ENCODE measurements at regions of chr16 and their contacts with region 1.

Region 1: GRCh38 chr16:760545-761343 is at the start of gene MSLN:
- DNase-seq: no peak
- CTCF ChIP-seq: no peak

Region 2: DNA sequence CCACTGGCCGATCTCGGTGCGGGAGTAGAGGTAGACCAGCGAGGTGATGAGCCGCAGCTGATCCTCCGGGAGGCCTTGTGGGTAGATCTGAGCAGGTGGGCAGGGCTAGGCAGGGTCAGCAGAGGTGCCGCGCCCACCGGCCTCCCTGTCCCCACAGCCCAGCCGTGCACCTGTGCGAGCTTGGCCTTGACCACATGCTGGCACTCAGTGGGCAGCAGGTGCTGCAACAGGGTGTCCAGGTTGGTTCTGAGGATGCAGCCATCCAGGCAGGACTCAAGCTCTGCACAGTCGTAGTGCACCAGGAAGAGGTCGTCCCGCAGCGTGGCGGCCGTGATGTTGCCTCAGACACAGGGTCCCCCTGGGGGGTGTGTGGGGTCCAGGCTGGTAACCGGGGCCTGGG is 12.2 kb after region 1 on chr16:
- CTCF ChIA-PET with region 1: no interaction called
- POLR2A ChIA-PET with region 1: interaction called, 13 read pairs
- DNase-seq: no peak
- CTCF ChIP-seq: no peak

Measured in GM10248 (cell line).